ENCODE measurements at regions of chr2 and their contacts with region 1.

Region 1: DNA sequence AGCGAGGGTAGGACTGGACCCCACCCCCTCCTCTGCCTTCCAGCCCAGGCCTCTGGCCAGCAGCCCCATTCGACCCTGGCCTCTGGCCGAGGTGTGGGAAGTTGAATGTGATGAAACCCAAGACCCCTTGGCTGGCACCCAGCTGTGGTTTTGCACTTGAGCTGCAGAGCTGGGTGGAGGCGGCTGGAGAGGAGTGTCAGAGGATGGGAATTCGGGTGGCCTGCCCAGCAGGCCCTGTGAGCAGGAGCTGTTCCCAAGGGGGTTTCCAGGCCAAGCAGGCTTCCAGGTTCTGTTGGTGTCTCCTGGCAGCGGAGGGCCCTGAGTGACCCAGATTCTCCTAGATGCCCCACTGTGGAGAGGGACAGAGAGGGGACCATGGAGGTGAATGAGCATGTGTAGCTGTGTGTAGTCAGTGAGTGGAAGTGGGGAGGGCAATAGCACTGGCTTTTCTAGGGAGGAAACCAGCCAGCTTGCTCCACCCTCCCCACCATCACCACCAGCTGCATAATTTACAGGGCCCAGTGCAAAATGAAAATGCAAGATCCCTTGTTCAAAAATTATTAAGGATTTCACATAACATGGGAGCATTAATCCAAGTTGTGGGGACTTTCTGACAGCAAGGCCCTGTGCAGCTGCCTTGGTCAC is 172.2 kb upstream of the HAAO start:
- DNase-seq: peak; percentile 90
- H3K4me3 Mint-ChIP-seq: no peak overlapping the region
- H3K27ac Mint-ChIP-seq: peak overlapping the region; percentile 80
- H3K4me1 Mint-ChIP-seq: peaks cover 29% of the 10 kb centered on the region
- H3K27me3 Mint-ChIP-seq: no peaks in the 10 kb centered on the region
- CTCF ChIP-seq: no peak

Region 2: GRCh38 chr2:42974721-42975717 is 10.5 kb after region 1 on chr2:
- CTCF ChIA-PET with region 1: interaction called, 31 read pairs
- POLR2A ChIA-PET with region 1: no interaction called
- intact Hi-C with region 1: no loop called
- DNase-seq: peak; percentile 64
- H3K4me3 Mint-ChIP-seq: no peak overlapping the region
- H3K27ac Mint-ChIP-seq: peak overlapping the region; percentile 52
- H3K4me1 Mint-ChIP-seq: peaks cover 38% of the 10 kb centered on the region
- H3K27me3 Mint-ChIP-seq: no peaks in the 10 kb centered on the region
- CTCF ChIP-seq: peak; percentile 95

Measured in MCF 10A (cell line).